Natural killer cell (primary cell): ENCODE measurements at regions of chr12 and their contacts with region 1.

Region 1: GRCh38 chr12:47276621-47277309 is 197.0 kb upstream of the AMIGO2 start:
- DNase-seq: peak; percentile 44 to 87
- ATAC-seq: peak; percentile 93 to 97 (median 97)
- H3K4me3 ChIP-seq: no peak overlapping the region
- H3K4me3 Mint-ChIP-seq: peak overlapping the region; percentile 60
- H3K27ac ChIP-seq: peak overlapping the region; percentile 89
- H3K27ac Mint-ChIP-seq: peak overlapping the region; percentile 86 to 94
- H3K4me1 ChIP-seq: peaks cover 22% of the 10 kb centered on the region
- H3K4me1 Mint-ChIP-seq: peaks cover 35 to 40% of the 10 kb centered on the region in 2 donors
- H3K27me3 ChIP-seq: no peaks in the 10 kb centered on the region
- H3K27me3 Mint-ChIP-seq: peaks cover 0 to 4% of the 10 kb centered on the region in 2 donors
- CTCF ChIP-seq: no peak

Region 2: GRCh38 chr12:47085815-47086252 is 190.9 kb before region 1 on chr12:
- intact Hi-C with region 1: loop called (anchors 2 kb)
- DNase-seq: peak; percentile 30 to 74
- ATAC-seq: peak; percentile 91 to 96 (median 92)
- H3K4me3 ChIP-seq: peak overlapping the region; percentile 11
- H3K4me3 Mint-ChIP-seq: peak overlapping the region; percentile 79
- H3K27ac ChIP-seq: peak overlapping the region; percentile 55
- H3K27ac Mint-ChIP-seq: peak overlapping the region; percentile 82 to 95
- H3K4me1 ChIP-seq: peaks cover 16% of the 10 kb centered on the region
- H3K4me1 Mint-ChIP-seq: peaks cover 51 to 53% of the 10 kb centered on the region in 2 donors
- H3K27me3 ChIP-seq: no peaks in the 10 kb centered on the region
- H3K27me3 Mint-ChIP-seq: no peaks in the 10 kb centered on the region
- CTCF ChIP-seq: no peak

Region 3: GRCh38 chr12:47317175-47317915 is 40.6 kb after region 1 on chr12:
- intact Hi-C with region 1: loop called (anchors 5 kb)
- DNase-seq: peak in 1 of 2 donors; percentile 52
- ATAC-seq: peak; percentile 72 to 88 (median 77)
- H3K4me3 ChIP-seq: peak overlapping the region; percentile 42
- H3K4me3 Mint-ChIP-seq: peak overlapping the region; percentile 72
- H3K27ac ChIP-seq: peak overlapping the region; percentile 65
- H3K27ac Mint-ChIP-seq: peak overlapping the region; percentile 69 to 81
- H3K4me1 ChIP-seq: peaks cover 18% of the 10 kb centered on the region
- H3K4me1 Mint-ChIP-seq: peaks cover 26 to 29% of the 10 kb centered on the region in 2 donors
- H3K27me3 ChIP-seq: no peaks in the 10 kb centered on the region
- H3K27me3 Mint-ChIP-seq: no peaks in the 10 kb centered on the region
- CTCF ChIP-seq: no peak

Region 4: DNA sequence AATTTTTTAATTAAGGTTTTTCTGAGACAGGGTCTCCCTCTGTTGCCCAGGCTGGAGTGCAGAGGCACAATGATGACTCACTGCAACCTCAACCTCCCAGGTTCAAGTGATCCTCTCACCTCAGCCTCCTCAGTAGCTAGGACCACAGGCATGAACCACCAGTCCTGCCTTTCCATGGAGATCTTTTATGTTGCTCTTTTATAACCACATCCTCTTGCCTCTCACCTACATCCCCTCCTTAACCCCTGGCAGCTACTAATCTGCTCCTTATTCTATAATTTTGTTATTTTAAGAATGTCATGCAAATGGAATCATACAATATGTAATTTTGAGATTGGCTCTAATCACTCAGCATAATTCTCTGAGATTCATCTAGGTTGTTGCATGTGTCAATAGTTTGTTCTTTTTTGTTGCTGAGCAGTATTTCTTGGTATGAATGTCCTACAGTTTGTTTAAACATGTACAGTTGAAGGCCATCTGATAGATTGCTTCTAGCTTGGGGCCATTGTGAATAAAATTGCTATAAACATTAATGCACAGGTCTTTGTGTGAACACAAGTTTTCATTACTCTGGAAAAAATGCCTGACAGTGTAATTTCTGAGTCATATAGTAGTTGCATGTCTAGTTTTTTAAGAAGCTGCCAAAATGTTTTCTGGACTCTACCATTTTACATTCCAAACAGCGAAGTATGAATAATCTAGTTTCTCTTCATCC is 52.2 kb after region 1 on chr12:
- intact Hi-C with region 1: loop called (anchors 2 kb)
- DNase-seq: no peak
- ATAC-seq: no peak
- H3K4me3 ChIP-seq: no peak overlapping the region
- H3K4me3 Mint-ChIP-seq: no peak overlapping the region
- H3K27ac ChIP-seq: no peak overlapping the region
- H3K27ac Mint-ChIP-seq: no peak overlapping the region
- H3K4me1 ChIP-seq: no peaks in the 10 kb centered on the region
- H3K4me1 Mint-ChIP-seq: peaks cover 11 to 12% of the 10 kb centered on the region in 2 donors
- H3K27me3 ChIP-seq: no peaks in the 10 kb centered on the region
- H3K27me3 Mint-ChIP-seq: no peaks in the 10 kb centered on the region
- CTCF ChIP-seq: no peak